ENCODE measurements at regions of chr3 and their contacts with region 1.

Region 1: GRCh38 chr3:107927361-107928083 is 163.3 kb downstream of the CD47 start:
- DNase-seq: peak; percentile 35 to 68
- H3K4me3 ChIP-seq: peak overlapping the region; percentile 48 to 73 (median 62)
- H3K27ac ChIP-seq: no peak overlapping the region
- H3K4me1 ChIP-seq: no peaks in the 10 kb centered on the region
- H3K27me3 ChIP-seq: no peaks in the 10 kb centered on the region
- CTCF ChIP-seq: peak; percentile 76 to 84 (median 79)
- POLR2A ChIP-seq: no peak

Region 2: DNA sequence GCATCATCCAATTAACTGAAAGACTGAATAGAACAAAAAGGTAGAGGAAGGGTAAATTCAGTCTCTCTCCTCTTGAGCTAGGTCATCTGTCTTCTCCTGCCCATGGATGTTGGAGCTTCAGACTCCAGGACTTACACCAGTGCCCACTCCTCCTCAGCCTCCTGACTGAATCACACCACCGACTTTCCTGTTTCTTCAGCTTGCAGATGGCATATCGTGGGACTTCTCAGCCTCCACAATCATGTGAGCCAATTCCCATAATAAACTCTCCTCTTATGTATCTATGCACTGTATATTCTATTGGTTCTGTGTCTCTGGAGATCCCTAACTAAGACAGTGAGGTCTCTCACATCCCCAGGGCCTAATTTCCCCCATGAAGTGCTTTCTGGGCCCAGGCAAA is 22.9 kb after region 1 on chr3:
- intact Hi-C with region 1: loop called (anchors 1 kb)
- DNase-seq: no peak
- H3K4me3 ChIP-seq: no peak overlapping the region
- H3K27ac ChIP-seq: no peak overlapping the region
- H3K4me1 ChIP-seq: no peaks in the 10 kb centered on the region
- H3K27me3 ChIP-seq: no peaks in the 10 kb centered on the region
- CTCF ChIP-seq: no peak
- POLR2A ChIP-seq: no peak

Measured in breast epithelium (tissue), 4 donors.